Testis (tissue), 5 donors: ENCODE measurements at regions of chr14 and their contacts with region 1.

Region 1: DNA sequence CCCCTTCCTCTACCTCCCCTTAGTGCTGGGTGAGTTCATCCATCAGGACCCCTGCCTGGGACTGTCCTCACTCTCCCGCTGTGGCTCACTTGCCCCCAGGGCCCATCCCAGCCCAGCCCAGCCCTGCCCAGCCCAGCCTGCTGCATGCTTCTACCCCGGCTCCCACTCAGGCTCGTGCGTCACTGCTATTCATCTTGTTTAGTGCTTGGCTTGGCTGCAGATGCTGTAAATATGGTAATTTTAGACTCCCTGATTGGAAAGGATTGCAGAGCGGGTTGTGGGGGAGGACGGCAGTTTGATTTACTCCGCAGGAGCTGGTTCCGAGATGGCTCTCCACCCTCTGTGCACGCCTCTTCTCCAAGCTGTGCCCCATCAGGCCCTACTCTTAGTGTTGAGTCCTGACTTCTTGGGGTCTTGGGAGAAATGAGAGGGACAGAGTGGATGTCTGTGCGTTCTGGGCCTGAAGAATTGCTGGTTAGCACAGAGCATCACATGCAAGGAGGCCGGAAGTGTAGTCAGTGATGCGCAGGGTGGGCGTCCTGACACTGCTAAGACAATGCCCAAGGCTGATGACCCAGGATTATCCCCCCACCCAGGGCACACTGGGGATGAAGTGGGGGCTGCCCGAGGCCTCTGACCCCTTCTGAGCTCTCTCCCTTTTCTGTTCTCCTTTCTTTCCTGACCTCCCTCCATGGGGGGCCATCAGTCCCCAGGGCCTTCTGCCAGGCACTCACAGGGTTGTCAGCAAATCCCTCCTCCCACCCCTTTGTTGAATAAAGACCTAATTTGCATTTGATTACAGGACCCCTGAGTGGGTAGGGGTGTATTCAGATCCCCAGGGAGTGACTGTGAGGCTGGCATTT is 244.4 kb downstream of the ZFP36L1 start:
- DNase-seq: peak; percentile 96
- H3K4me3 ChIP-seq: no peak overlapping the region
- H3K27ac ChIP-seq: peak overlapping the region; percentile 92 to 96
- H3K4me1 ChIP-seq: peaks cover 69% of the 10 kb centered on the region
- H3K27me3 ChIP-seq: no peaks in the 10 kb centered on the region
- CTCF ChIP-seq: no peak
- POLR2A ChIP-seq: no peak

Region 2: GRCh38 chr14:67943947-67944346 is 604.5 kb before region 1 on chr14:
- intact Hi-C with region 1: loop called (anchors 5 kb)
- DNase-seq: peak; percentile 92
- H3K4me3 ChIP-seq: no peak overlapping the region
- H3K27ac ChIP-seq: peak overlapping the region in 1 of 2 donors; percentile 48
- H3K4me1 ChIP-seq: peaks cover 4% of the 10 kb centered on the region
- H3K27me3 ChIP-seq: no peaks in the 10 kb centered on the region
- CTCF ChIP-seq: peak; percentile 68 to 94 (median 88)
- POLR2A ChIP-seq: no peak

Region 3: GRCh38 chr14:68479247-68479646 is 69.2 kb before region 1 on chr14:
- intact Hi-C with region 1: no loop called
- DNase-seq: no peak
- H3K4me3 ChIP-seq: no peak overlapping the region
- H3K27ac ChIP-seq: no peak overlapping the region
- H3K4me1 ChIP-seq: peaks cover 7% of the 10 kb centered on the region
- H3K27me3 ChIP-seq: no peaks in the 10 kb centered on the region
- CTCF ChIP-seq: no peak
- POLR2A ChIP-seq: no peak

Region 4: GRCh38 chr14:68795597-68796417 is 247.4 kb after region 1 on chr14:
- intact Hi-C with region 1: loop called (anchors 10 kb)
- DNase-seq: peak; percentile 83
- H3K4me3 ChIP-seq: peak overlapping the region; percentile 81 to 92
- H3K27ac ChIP-seq: peak overlapping the region; percentile 99 to 100
- H3K4me1 ChIP-seq: peaks cover 4% of the 10 kb centered on the region
- H3K27me3 ChIP-seq: no peaks in the 10 kb centered on the region
- CTCF ChIP-seq: peak; percentile 81 to 93 (median 91)
- POLR2A ChIP-seq: no peak